ENCODE measurements at regions of chr14 and their contacts with region 1.

Region 1: GRCh38 chr14:30656190-30656632 is 34.1 kb downstream of the SCFD1 start:
- DNase-seq: peak in 5 of 9 donors; percentile 6 to 31 (median 29)
- ATAC-seq: peak; percentile 72
- H3K4me3 ChIP-seq: no peak overlapping the region
- H3K4me3 Mint-ChIP-seq: no peak overlapping the region
- H3K27ac ChIP-seq: no peak overlapping the region
- H3K27ac Mint-ChIP-seq: no peak overlapping the region
- H3K4me1 ChIP-seq: no peaks in the 10 kb centered on the region
- H3K4me1 Mint-ChIP-seq: no peaks in the 10 kb centered on the region
- H3K27me3 ChIP-seq: no peaks in the 10 kb centered on the region
- H3K27me3 Mint-ChIP-seq: no peaks in the 10 kb centered on the region

Region 2: DNA sequence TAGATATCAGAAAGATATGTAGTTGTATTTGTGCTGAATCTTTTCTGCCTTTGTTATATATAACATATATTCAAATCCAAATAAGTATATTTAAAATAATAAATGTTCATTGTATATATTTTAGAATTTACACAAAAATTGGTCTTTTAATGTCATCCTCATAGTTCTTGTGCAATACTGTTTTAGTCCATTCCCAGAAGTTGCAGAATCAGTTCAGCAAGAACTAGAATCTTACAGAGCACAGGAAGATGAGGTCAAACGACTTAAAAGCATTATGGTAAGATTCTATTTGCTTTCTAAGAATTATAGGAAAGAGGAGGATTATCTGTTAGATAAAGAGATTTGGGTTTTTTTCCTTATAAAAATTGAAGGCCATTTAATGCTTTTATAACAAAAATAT is 16.9 kb after region 1 on chr14:
- CTCF ChIA-PET with region 1: interaction called, 3 read pairs
- POLR2A ChIA-PET with region 1: no interaction called
- intact Hi-C with region 1: loop called in 1 of 2 experiments (anchors 2 kb)
- DNase-seq: no peak
- ATAC-seq: no peak
- H3K4me3 ChIP-seq: no peak overlapping the region
- H3K4me3 Mint-ChIP-seq: no peak overlapping the region
- H3K27ac ChIP-seq: no peak overlapping the region
- H3K27ac Mint-ChIP-seq: no peak overlapping the region
- H3K4me1 ChIP-seq: no peaks in the 10 kb centered on the region
- H3K4me1 Mint-ChIP-seq: peaks cover 0 to 11% (median 5%) of the 10 kb centered on the region in 7 donors
- H3K27me3 ChIP-seq: no peaks in the 10 kb centered on the region
- H3K27me3 Mint-ChIP-seq: no peaks in the 10 kb centered on the region

Region 3: DNA sequence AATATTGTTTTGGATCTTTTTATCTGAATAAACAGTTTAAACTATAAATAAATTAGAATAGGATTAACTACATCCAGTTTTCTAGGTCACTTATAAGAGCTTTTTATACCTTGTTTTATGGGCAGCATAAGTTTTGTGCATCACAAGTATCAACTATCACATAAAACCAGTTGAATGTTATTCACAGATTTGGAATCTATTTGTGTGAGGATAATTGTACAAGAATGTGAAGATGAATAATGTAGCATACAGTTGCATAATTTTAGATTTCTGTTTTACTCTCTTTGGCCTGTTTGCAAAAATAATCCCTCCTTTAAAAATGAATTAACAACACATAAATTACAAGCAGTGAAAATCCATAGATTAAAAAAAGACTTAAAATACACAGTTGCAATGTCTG is 54.7 kb after region 1 on chr14:
- CTCF ChIA-PET with region 1: no interaction called
- POLR2A ChIA-PET with region 1: no interaction called
- intact Hi-C with region 1: loop called in 1 of 2 experiments (anchors 10 kb)
- DNase-seq: no peak
- ATAC-seq: no peak
- H3K4me3 ChIP-seq: no peak overlapping the region
- H3K4me3 Mint-ChIP-seq: no peak overlapping the region
- H3K27ac ChIP-seq: no peak overlapping the region
- H3K27ac Mint-ChIP-seq: no peak overlapping the region
- H3K4me1 ChIP-seq: no peaks in the 10 kb centered on the region
- H3K4me1 Mint-ChIP-seq: no peaks in the 10 kb centered on the region
- H3K27me3 ChIP-seq: no peaks in the 10 kb centered on the region
- H3K27me3 Mint-ChIP-seq: no peaks in the 10 kb centered on the region

Region 4: GRCh38 chr14:30725763-30726162 is 69.6 kb after region 1 on chr14:
- CTCF ChIA-PET with region 1: no interaction called
- POLR2A ChIA-PET with region 1: no interaction called
- intact Hi-C with region 1: no loop called
- DNase-seq: no peak
- ATAC-seq: no peak
- H3K4me3 ChIP-seq: no peak overlapping the region
- H3K4me3 Mint-ChIP-seq: no peak overlapping the region
- H3K27ac ChIP-seq: no peak overlapping the region
- H3K27ac Mint-ChIP-seq: peak overlapping the region in 4 of 9 donors; percentile 27 to 63 (median 33)
- H3K4me1 ChIP-seq: no peaks in the 10 kb centered on the region
- H3K4me1 Mint-ChIP-seq: peaks cover 0 to 13% (median 9%) of the 10 kb centered on the region in 7 donors
- H3K27me3 ChIP-seq: no peaks in the 10 kb centered on the region
- H3K27me3 Mint-ChIP-seq: no peaks in the 10 kb centered on the region

Region 5: DNA sequence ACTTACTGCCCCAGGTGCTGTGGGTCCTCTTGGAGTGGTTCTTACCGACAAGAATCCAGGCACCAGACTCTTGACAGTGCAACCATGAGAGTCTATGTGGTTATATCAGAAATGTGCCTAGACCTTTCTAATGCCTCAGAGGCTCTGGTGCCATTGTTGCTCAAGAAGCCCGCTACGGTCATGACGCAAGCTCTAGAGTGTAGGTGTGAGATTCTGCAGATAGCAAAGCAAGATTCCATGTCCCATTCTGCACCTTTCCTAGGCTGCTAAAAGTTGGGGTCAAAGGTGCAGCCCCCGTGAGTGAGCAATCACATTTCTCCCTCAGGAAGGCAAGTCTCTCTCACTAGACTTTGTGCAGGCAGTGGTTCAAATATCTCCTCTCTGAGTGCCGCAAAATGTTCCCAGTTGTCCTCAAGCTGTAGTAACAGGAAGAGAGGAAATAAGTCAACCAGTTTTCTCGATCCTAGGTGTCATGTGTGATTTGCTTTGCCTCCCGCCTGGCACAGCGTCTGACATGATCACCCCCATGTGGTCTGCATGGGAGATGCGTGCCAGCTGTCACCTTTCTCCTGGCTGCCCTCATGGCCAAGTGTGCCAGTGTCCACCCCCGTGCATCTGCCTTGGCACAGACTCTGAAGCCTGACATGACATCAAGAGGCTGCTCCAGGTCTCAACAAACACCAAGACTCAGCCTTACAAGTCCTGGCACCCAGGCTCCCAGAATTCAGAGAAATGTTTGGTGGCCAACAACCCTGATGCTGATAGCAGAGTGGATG is 95.6 kb after region 1 on chr14:
- CTCF ChIA-PET with region 1: no interaction called
- POLR2A ChIA-PET with region 1: no interaction called
- intact Hi-C with region 1: loop called in 1 of 2 experiments (anchors 1 kb)
- DNase-seq: peak in 2 of 9 donors; percentile 2 to 4
- ATAC-seq: no peak
- H3K4me3 ChIP-seq: no peak overlapping the region
- H3K4me3 Mint-ChIP-seq: no peak overlapping the region
- H3K27ac ChIP-seq: no peak overlapping the region
- H3K27ac Mint-ChIP-seq: no peak overlapping the region
- H3K4me1 ChIP-seq: no peaks in the 10 kb centered on the region
- H3K4me1 Mint-ChIP-seq: no peaks in the 10 kb centered on the region
- H3K27me3 ChIP-seq: no peaks in the 10 kb centered on the region
- H3K27me3 Mint-ChIP-seq: peaks cover 4 to 17% (median 9%) of the 10 kb centered on the region in 5 donors

Region 6: GRCh38 chr14:30906752-30907658 is 250.8 kb after region 1 on chr14:
- CTCF ChIA-PET with region 1: no interaction called
- POLR2A ChIA-PET with region 1: no interaction called
- intact Hi-C with region 1: loop called (anchors 1 to 5 kb)
- DNase-seq: peak in 2 of 9 donors; percentile 2 to 11
- ATAC-seq: no peak
- H3K4me3 ChIP-seq: no peak overlapping the region
- H3K4me3 Mint-ChIP-seq: no peak overlapping the region
- H3K27ac ChIP-seq: no peak overlapping the region
- H3K27ac Mint-ChIP-seq: no peak overlapping the region
- H3K4me1 ChIP-seq: no peaks in the 10 kb centered on the region
- H3K4me1 Mint-ChIP-seq: no peaks in the 10 kb centered on the region
- H3K27me3 ChIP-seq: no peaks in the 10 kb centered on the region
- H3K27me3 Mint-ChIP-seq: no peaks in the 10 kb centered on the region